ENCODE measurements at regions of chr6 and their contacts with region 1.

Region 1: GRCh38 chr6:159116343-159116742 is 52.9 kb upstream of the FNDC1 start:
- DNase-seq: no peak
- H3K4me3 ChIP-seq: no peak overlapping the region
- H3K27ac ChIP-seq: peak overlapping the region in 2 of 4 donors; percentile 62 to 77
- H3K4me1 ChIP-seq: peaks cover 0 to 19% (median 17%) of the 10 kb centered on the region in 4 donors
- H3K27me3 ChIP-seq: no peaks in the 10 kb centered on the region
- CTCF ChIP-seq: no peak
- EP300 ChIP-seq: no peak
- POLR2A ChIP-seq: no peak

Region 2: GRCh38 chr6:158644231-158645063 is 471.9 kb before region 1 on chr6 and contains the start of gene DYNLT1:
- intact Hi-C with region 1: loop called (anchors 5 kb)
- DNase-seq: peak; percentile 95
- H3K4me3 ChIP-seq: peak within 1 kb of the TSS; percentile 83 to 98 (median 89)
- H3K27ac ChIP-seq: peak within 1 kb of the TSS; percentile 95 to 99 (median 96)
- H3K4me1 ChIP-seq: peaks cover 0 to 41% (median 35%) of the 10 kb centered on the region in 4 donors
- H3K27me3 ChIP-seq: no peaks in the 10 kb centered on the region
- CTCF ChIP-seq: no peak
- EP300 ChIP-seq: peak in 2 of 4 donors; percentile 25 to 39
- POLR2A ChIP-seq: peak; percentile 93 to 96
- total RNA-seq, gene DYNLT1: 68.7 to 118 (median 105) TPM